ENCODE measurements at regions of chr7 and their contacts with region 1.

Region 1: DNA sequence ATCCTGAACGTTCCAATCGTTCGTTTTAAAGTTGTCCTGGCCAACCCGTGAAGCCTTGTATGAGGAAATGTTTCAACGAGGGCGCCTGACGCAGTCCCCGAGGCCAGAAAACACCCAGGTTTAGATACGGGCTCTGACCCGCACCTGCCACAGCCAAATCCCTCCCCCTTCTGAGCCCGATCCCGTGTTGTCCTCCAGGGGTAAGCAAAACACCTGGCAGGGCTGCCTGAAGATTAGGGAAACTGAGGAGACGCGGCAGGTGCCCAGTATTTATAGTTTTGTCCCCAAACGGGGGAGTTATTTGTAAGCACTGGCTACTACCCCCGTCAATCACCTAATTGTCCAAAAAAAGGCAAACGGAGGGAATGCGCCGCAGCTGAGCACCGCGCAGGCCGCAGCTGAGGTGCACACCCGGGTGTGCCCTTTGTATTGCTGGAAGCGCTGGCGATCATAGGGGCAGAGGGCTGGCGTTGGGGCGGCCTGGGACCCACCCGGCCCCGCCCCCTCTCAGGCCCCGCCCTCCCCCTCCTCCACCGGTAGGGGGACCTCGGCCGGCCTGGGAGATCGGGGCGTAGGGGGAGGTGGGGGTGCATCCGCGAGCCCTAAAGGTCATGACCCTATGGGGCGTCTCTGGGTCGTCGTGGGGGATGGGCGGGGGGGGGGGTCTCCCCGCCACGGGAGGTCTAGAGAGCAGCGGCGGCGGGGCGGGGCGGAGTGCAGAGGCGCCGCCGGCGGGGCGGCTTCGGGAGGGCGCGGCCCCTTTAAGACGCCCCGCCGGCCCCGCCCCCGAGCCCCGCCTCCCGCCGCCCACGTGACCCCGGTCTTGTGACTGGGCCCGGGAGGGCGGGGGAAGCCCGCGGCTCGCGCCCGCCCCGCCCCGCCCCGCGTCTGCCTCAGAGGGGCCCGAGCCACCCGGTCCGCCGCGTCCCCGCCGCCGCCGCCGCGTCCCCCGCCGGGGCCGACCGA is at the start of gene BRI3:
- DNase-seq: peak; percentile 95
- H3K4me3 ChIP-seq: peak within 1 kb of the TSS; percentile 90 to 100 (median 100)
- H3K27ac ChIP-seq: peak within 1 kb of the TSS; percentile 95 to 97 (median 96)
- H3K4me1 ChIP-seq: peaks cover 0 to 59% (median 53%) of the 10 kb centered on the region in 4 donors
- H3K27me3 ChIP-seq: no peaks in the 10 kb centered on the region
- CTCF ChIP-seq: no peak
- EP300 ChIP-seq: no peak
- POLR2A ChIP-seq: peak; percentile 86 to 91
- total RNA-seq, gene BRI3: 44.9 to 61.8 (median 48.4) TPM

Region 2: DNA sequence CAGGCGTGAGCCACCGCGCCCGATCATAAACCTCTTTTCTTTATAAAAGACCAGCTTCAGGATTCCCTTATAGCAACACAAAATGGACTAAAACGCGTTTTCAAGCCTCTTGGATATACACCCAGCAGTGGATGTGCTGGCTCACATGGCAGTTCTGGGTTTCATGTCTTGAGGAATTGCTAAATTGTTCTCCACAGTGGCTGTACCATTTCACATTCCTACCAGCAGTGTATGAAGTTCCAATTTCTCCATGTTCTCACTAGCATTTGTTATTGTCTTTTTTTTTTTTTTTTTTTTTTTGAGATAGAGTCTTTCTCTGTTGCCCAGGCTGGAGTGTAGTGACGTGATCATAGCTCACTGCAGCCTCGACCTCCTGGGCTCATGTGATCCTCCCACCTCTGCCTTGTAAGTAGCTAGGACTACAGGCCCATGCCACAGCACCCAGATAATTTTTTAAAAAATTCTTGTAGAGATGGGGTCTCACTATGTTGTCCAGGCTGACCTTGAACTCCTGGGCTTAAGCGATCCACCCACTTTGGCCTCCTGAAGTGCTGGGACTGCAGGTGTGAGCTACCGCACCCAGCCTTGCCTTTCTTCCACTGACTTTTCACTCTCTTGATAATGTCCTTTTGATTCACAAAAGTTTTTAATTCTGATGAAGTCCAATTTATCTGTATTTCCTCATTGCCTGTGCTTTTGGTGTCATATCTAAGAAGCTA is 46.5 kb before region 1 on chr7:
- intact Hi-C with region 1: no loop called
- DNase-seq: no peak
- H3K4me3 ChIP-seq: no peak overlapping the region
- H3K27ac ChIP-seq: no peak overlapping the region
- H3K4me1 ChIP-seq: no peaks in the 10 kb centered on the region
- H3K27me3 ChIP-seq: no peaks in the 10 kb centered on the region
- CTCF ChIP-seq: no peak
- EP300 ChIP-seq: no peak
- POLR2A ChIP-seq: no peak

Region 3: GRCh38 chr7:98878365-98879165 is 597.5 kb after region 1 on chr7 and contains the start of gene TRRAP:
- intact Hi-C with region 1: loop called (anchors 5 kb)
- DNase-seq: peak; percentile 80
- H3K4me3 ChIP-seq: peak within 1 kb of the TSS; percentile 77 to 94 (median 83)
- H3K27ac ChIP-seq: peak within 1 kb of the TSS; percentile 91 to 97 (median 93)
- H3K4me1 ChIP-seq: peaks cover 0 to 19% (median 14%) of the 10 kb centered on the region in 4 donors
- H3K27me3 ChIP-seq: peaks cover 0 to 8% (median 3%) of the 10 kb centered on the region in 3 donors
- CTCF ChIP-seq: peak; percentile 80 to 99 (median 90)
- EP300 ChIP-seq: no peak
- POLR2A ChIP-seq: no peak
- total RNA-seq, gene TRRAP: 18.9 to 35.5 (median 24.0) TPM